Heart right ventricle (tissue), 16 donors: ENCODE measurements at regions of chr4 and their contacts with region 1.

Region 1: DNA sequence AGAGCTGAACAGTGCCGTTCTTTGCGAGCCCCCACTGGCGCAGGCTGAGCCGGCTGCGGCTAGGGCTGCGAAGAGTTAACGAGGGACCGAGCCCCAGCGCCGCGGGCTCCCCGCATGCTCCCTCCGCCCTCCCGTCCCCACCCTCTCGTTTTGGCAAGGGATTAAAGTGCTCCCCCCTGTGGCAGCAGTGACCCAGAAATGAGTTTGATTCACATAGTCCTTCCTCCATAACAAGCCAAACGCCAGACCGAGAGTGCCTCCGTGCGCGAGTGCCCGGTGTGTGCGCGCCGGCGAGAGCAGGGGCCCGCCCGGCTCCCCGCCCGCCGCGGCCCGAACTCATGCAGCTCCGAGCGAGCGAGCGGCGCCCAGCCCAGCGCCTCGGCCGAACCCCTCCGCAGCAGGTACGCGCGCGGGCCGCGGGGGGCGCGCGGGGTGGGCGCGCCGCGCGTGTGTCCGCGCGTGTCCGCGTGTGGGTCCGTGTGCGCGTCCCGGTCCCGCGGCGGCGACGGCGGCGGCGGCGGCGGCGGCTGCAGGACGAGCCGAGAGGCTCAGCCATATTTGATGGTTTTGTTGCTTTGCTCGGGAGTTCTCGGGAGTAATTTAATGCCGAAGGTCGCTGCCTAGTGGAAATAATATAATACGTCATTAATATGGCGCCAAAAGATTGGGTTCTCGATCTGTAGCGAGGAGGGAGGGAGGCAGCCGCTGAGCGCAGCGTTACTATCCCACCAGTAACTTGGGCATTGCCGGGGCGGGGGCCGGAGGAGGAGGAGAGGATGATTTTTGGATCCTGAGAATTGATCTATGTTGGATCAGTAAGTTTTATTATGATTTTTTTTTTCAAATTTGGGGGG is at the start of gene JADE1:
- DNase-seq: peak; percentile 86 to 94
- ATAC-seq: peak; percentile 66 to 86 (median 74)
- H3K4me3 ChIP-seq: peak within 1 kb of the TSS; percentile 63 to 98 (median 85)
- H3K27ac ChIP-seq: peak within 1 kb of the TSS; percentile 88 to 98 (median 95)
- H3K4me1 ChIP-seq: peaks cover 0 to 18% (median 12%) of the 10 kb centered on the region in 9 donors
- H3K27me3 ChIP-seq: no peaks in the 10 kb centered on the region
- CTCF ChIP-seq: peak; percentile 35 to 76 (median 57)
- total RNA-seq, gene JADE1: 19.4 to 32.3 (median 23.5) TPM

Region 2: GRCh38 chr4:128307123-128307571 is 502.6 kb before region 1 on chr4:
- intact Hi-C with region 1: loop called in 1 of 10 experiments (anchors 10 kb)
- DNase-seq: no peak
- ATAC-seq: no peak
- H3K4me3 ChIP-seq: no peak overlapping the region
- H3K27ac ChIP-seq: no peak overlapping the region
- H3K4me1 ChIP-seq: peaks cover 0 to 75% (median 16%) of the 10 kb centered on the region in 9 donors
- H3K27me3 ChIP-seq: no peaks in the 10 kb centered on the region
- CTCF ChIP-seq: no peak

Region 3: GRCh38 chr4:128516301-128516969 is 293.3 kb before region 1 on chr4:
- intact Hi-C with region 1: no loop called
- DNase-seq: no peak
- ATAC-seq: no peak
- H3K4me3 ChIP-seq: no peak overlapping the region
- H3K27ac ChIP-seq: peak overlapping the region in 2 of 10 donors; percentile 28 to 71
- H3K4me1 ChIP-seq: peaks cover 8 to 40% (median 31%) of the 10 kb centered on the region in 9 donors
- H3K27me3 ChIP-seq: no peaks in the 10 kb centered on the region
- CTCF ChIP-seq: no peak

Region 4: GRCh38 chr4:128565565-128566186 is 244.0 kb before region 1 on chr4:
- intact Hi-C with region 1: loop called in 8 of 10 experiments (anchors 2 to 10 kb)
- DNase-seq: peak in 1 of 2 donors; percentile 39
- ATAC-seq: peak; percentile 50 to 80 (median 77)
- H3K4me3 ChIP-seq: no peak overlapping the region
- H3K27ac ChIP-seq: no peak overlapping the region
- H3K4me1 ChIP-seq: peaks cover 0 to 21% (median 4%) of the 10 kb centered on the region in 9 donors
- H3K27me3 ChIP-seq: no peaks in the 10 kb centered on the region
- CTCF ChIP-seq: peak; percentile 25 to 66 (median 61)

Region 5: GRCh38 chr4:128718768-128719167 is 90.9 kb before region 1 on chr4:
- intact Hi-C with region 1: loop called in 2 of 10 experiments (anchors 10 kb)
- DNase-seq: no peak
- ATAC-seq: no peak
- H3K4me3 ChIP-seq: no peak overlapping the region
- H3K27ac ChIP-seq: no peak overlapping the region
- H3K4me1 ChIP-seq: peaks cover 0 to 11% (median 6%) of the 10 kb centered on the region in 9 donors
- H3K27me3 ChIP-seq: no peaks in the 10 kb centered on the region
- CTCF ChIP-seq: no peak

Region 6: DNA sequence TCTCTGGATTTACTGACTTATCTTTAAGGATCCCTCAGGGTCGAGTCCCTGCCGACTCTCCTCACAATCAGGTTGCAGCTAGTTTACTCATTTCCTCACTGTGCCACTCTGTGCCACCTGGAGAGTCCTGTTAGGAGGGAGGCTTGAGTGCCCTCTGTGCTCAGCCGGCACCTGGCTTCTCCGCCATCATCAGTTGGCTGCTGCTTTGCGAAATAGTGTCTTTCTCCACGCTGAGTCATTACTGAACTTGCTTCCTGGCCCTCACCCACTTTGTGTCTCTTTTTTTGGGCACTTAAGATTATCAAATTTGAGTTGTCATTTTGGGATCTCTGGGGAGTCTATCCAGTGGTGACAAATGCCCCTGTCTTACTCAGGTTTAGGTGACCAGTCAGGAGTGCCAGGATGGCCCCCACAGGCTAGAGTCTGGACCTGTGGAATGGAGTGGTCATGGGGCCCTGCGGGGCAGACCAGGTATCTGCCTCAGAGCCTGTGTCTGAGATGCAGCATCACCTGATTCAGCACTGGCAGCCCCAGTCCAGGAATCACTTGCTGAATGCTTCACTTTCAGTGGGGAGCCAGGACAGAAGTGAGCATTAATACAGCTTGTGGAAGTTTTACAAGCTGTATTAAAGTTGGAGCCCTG is 37.5 kb after region 1 on chr4:
- intact Hi-C with region 1: loop called in 3 of 10 experiments (anchors 5 kb)
- DNase-seq: no peak
- ATAC-seq: no peak
- H3K4me3 ChIP-seq: no peak overlapping the region
- H3K27ac ChIP-seq: peak overlapping the region in 4 of 10 donors; percentile 4 to 73 (median 49)
- H3K4me1 ChIP-seq: peaks cover 12 to 58% (median 38%) of the 10 kb centered on the region in 9 donors
- H3K27me3 ChIP-seq: no peaks in the 10 kb centered on the region
- CTCF ChIP-seq: no peak